ENCODE measurements at regions of chr6 and their contacts with region 1.

Region 1: GRCh38 chr6:17536586-17536985 is 63.5 kb upstream of the FAM8A1 start:
- DNase-seq: no peak
- H3K4me3 ChIP-seq: no peak overlapping the region
- H3K27me3 ChIP-seq: no peaks in the 10 kb centered on the region
- CTCF ChIP-seq: no peak

Region 2: DNA sequence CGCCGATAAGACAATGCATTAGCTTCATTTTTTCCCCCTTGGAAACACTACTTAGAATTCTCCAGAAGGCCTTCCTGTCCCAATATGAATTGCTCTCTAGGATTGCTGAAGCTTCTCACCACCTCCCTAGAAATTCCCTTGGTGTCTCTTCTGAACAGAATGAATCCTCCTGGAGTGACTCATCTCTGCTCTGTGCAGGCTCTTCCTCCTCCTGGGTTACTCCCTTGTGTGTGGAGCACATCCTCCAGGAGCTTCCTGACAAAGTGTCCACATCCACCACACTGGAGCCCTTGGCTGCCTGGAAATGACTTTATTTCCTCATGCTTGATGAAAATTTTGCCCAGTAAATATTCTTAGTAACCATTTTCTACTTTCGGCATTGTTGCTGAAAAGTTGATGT is 1928.2 kb before region 1 on chr6:
- CTCF ChIA-PET with region 1: no interaction called
- POLR2A ChIA-PET with region 1: interaction called, 12 read pairs
- DNase-seq: peak; percentile 56
- H3K4me3 ChIP-seq: no peak overlapping the region
- H3K27me3 ChIP-seq: no peaks in the 10 kb centered on the region
- CTCF ChIP-seq: no peak

Measured in BJ (cell line).